MCF 10A (cell line): ENCODE measurements at regions of chr11 and their contacts with region 1.

Region 1: GRCh38 chr11:73335204-73335923 is 27.3 kb downstream of the ARHGEF17 start:
- DNase-seq: peak; percentile 85
- H3K4me3 Mint-ChIP-seq: no peak overlapping the region
- H3K27ac Mint-ChIP-seq: no peak overlapping the region
- H3K4me1 Mint-ChIP-seq: peaks cover 24% of the 10 kb centered on the region
- H3K27me3 Mint-ChIP-seq: no peaks in the 10 kb centered on the region
- CTCF ChIP-seq: peak; percentile 97

Region 2: GRCh38 chr11:73295231-73295995 is 40.0 kb before region 1 on chr11:
- CTCF ChIA-PET with region 1: interaction called, 38 read pairs
- POLR2A ChIA-PET with region 1: no interaction called
- intact Hi-C with region 1: loop called (anchors 1 kb)
- DNase-seq: peak; percentile 80
- H3K4me3 Mint-ChIP-seq: no peak overlapping the region
- H3K27ac Mint-ChIP-seq: no peak overlapping the region
- H3K4me1 Mint-ChIP-seq: peaks cover 5% of the 10 kb centered on the region
- H3K27me3 Mint-ChIP-seq: no peaks in the 10 kb centered on the region
- CTCF ChIP-seq: peak; percentile 88

Region 3: DNA sequence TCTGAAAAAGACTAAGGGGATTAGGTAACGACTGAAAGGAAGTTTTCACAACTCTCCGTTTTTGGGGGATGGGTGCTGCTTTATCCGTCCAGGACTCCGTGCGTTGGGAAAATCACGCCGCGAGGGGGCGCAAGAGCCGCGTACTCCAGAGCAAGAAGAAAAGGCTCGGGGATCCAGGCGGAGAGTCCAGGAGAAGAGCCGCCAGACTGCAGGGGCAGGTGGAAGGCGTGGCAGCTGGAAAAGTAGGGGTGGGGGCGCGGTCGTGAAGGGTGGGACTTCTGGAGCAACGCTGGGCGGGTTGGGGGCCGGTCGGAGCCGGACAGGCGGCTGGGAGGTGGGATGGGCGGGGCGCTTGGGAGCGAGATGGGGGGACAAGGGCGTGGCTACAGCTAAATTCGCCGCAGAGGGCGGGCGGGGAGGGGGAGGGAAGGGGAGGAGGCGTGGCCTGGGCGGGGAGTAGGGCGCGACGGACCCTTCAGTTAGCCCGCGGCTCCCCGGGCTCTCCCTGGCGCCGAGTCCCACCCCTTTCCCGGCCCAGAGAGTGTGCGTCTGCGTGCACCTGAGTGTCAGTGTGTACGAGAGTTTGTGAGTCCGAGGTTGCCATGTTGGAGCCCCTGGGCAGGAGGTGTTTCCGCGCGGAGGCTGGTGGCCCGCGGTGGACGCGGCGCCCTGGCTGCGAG is 27.9 kb before region 1 on chr11:
- CTCF ChIA-PET with region 1: interaction called, 127 read pairs
- POLR2A ChIA-PET with region 1: interaction called, 36 read pairs
- intact Hi-C with region 1: loop called (anchors 1 kb)
- DNase-seq: peak; percentile 97
- H3K4me3 Mint-ChIP-seq: peak overlapping the region; percentile 73
- H3K27ac Mint-ChIP-seq: peak overlapping the region; percentile 6
- H3K4me1 Mint-ChIP-seq: peaks cover 21% of the 10 kb centered on the region
- H3K27me3 Mint-ChIP-seq: no peaks in the 10 kb centered on the region
- CTCF ChIP-seq: peak; percentile 80

Region 4: DNA sequence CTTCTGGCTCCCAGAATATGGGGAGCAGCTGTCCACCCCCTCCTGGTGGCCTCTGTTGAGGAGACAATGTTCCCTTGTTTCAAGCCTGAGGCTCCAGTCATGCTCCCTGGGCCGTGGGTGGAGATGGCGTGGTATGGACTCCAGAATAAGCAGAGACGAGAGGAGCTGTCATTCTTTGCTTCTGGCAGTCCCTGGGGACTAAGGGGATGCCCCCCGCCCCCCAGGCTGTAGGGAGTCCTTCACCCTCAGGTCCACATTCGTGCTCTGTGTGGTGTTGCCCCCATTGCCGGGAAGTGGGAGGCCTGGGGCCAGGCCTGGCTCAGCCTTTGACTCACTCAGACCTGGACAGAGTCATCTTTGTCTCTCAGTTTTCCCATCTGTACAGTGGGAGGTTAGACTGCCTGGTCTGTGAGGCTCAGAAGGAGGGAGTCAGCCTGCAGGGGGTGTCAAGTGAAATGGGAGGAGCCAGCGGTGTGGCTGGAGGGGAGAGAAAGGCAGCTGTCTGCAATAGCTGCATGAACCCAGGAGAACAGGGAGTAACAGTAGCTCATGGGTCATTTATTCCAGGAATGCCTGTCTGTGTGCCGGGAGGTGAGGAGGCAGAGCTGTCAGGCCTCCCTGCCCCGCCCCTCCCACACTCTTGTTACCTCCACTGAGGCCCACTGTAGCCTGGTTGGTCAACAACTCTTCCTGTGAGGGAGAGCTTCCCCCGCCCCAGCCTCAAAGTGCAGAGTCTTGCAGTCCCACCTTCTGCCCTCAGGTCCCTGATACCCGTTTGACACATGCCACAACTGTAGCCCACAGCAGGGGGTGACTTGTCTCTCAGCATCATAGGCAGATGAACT is 21.0 kb before region 1 on chr11:
- CTCF ChIA-PET with region 1: interaction called, 127 read pairs
- POLR2A ChIA-PET with region 1: interaction called, 36 read pairs
- intact Hi-C with region 1: no loop called
- DNase-seq: no peak
- H3K4me3 Mint-ChIP-seq: peak overlapping the region; percentile 40
- H3K27ac Mint-ChIP-seq: peak overlapping the region; percentile 89
- H3K4me1 Mint-ChIP-seq: peaks cover 46% of the 10 kb centered on the region
- H3K27me3 Mint-ChIP-seq: no peaks in the 10 kb centered on the region
- CTCF ChIP-seq: no peak

Region 5: GRCh38 chr11:73323464-73323863 is 11.9 kb before region 1 on chr11:
- CTCF ChIA-PET with region 1: interaction called, 19 read pairs
- POLR2A ChIA-PET with region 1: interaction called, 4 read pairs
- intact Hi-C with region 1: no loop called
- DNase-seq: no peak
- H3K4me3 Mint-ChIP-seq: no peak overlapping the region
- H3K27ac Mint-ChIP-seq: no peak overlapping the region
- H3K4me1 Mint-ChIP-seq: peaks cover 9% of the 10 kb centered on the region
- H3K27me3 Mint-ChIP-seq: no peaks in the 10 kb centered on the region
- CTCF ChIP-seq: no peak

Region 6: DNA sequence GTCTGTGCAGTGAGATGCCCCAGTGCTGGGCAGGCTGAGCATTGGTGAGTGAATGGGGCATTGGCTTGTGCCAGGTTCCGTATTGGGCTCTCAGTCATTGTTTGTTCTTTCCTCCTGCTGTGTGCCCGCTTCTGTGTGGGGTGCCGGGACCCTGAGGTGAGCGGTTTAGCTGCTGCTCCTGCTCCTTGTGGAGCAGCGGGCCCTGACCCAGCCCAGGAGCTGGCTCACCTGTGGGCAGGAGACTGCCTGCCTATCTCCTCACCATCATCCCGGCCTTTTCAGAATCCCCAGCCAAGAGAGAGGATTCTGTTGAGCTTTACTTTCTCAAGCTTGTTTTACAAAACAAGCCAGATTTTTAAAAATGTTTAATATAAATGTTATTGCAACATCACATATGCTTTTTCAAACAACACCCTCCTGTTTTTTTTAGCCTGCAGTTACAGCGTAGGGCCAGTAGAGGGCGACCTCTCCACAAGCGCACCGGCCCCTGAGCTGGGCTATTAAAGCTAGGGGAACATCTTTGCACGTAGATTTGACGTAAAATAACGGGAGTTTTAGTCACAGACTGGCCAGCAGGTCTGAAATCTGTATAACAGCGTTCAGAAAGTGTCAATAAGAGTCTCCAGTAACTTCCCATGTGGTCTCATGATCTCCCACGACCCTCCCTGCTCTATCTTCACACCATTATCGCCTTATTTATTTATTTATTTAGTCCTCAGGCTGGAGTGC is 15.7 kb after region 1 on chr11:
- CTCF ChIA-PET with region 1: interaction called, 58 read pairs
- POLR2A ChIA-PET with region 1: interaction called, 3 read pairs
- intact Hi-C with region 1: no loop called
- DNase-seq: peak; percentile 72
- H3K4me3 Mint-ChIP-seq: no peak overlapping the region
- H3K27ac Mint-ChIP-seq: no peak overlapping the region
- H3K4me1 Mint-ChIP-seq: no peaks in the 10 kb centered on the region
- H3K27me3 Mint-ChIP-seq: no peaks in the 10 kb centered on the region
- CTCF ChIP-seq: peak; percentile 89

Region 7: DNA sequence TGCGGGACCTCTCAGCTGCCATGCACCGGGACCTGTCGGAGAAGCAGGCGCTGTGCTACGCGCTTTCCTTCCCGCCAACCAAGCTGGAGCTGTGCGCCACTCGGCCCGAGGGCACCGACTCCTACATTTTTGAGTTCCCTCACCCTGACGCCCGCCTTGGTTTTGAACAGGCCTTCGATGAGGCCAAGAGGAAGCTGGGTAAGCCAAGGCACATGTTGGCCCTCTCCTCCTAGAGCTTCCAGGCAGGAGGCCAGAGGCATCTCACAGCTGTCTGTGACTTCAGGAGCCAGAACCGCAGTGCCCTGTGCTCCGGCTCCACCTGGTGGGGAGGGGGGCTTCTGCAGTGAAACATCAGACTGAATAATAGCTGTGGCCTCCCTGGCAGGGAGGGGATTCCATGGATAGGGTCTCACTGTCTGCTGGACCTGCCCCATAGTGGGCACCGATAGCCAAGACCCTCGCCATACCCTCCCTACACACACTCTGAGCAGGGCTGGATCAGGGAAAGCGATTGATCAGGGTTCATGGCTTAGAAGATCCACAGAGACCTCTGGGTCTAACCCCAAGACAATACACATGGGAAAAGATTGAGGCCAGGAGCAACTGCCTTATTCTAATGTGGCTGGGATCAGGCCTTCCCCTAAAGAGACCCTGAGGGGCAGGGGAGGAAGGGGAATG is 25.1 kb after region 1 on chr11:
- CTCF ChIA-PET with region 1: interaction called, 10 read pairs
- POLR2A ChIA-PET with region 1: no interaction called
- intact Hi-C with region 1: no loop called
- DNase-seq: peak; percentile 29
- H3K4me3 Mint-ChIP-seq: no peak overlapping the region
- H3K27ac Mint-ChIP-seq: no peak overlapping the region
- H3K4me1 Mint-ChIP-seq: no peaks in the 10 kb centered on the region
- H3K27me3 Mint-ChIP-seq: no peaks in the 10 kb centered on the region
- CTCF ChIP-seq: peak; percentile 40